Testis (tissue), 5 donors: ENCODE measurements at regions of chr11 and their contacts with region 1.

Region 1: DNA sequence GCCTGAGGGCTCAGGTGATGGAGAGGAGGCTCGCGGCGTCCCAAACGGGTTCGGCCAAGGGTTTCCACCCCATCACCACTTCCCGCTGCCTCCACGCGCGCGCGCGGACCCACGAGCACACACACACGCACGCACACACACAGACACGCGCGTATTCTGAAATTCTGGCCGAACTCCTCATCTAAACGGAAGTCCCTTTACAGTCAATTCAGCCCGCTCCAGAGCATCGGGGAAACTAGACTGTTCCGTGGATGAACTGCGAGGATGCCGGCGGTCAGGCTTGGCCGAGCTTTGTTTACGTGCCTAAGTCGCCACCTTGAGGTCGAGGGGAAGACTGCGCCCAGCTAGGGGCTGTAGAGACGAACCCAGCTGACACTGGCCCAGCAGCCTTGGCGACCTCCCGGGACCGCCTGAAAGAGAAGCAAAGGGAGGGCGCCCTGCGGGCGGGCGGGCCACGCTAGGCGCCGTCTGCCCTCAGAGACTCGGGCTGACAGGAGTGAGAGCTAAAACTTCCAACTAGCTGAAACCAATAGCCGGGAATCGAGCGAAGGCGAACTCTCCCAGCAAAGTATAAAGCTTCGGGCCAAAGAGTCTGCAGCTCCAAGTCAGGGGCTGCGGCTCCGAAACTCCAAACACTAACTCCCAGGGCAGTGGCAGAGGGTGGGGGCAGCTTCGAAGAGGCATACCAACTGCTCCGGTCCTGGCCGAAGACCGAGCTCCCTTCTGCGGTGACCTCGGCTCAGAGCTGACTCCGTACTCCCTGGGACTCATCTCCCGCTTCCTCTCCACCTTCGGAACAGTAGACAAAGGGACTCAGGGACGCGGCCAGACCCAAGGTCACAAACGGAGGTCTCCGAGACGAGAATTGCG is 124.7 kb upstream of the C11orf58 start:
- DNase-seq: peak; percentile 94
- H3K4me3 ChIP-seq: peak overlapping the region; percentile 36 to 62
- H3K27ac ChIP-seq: peak overlapping the region in 1 of 2 donors; percentile 28
- H3K4me1 ChIP-seq: peaks cover 12% of the 10 kb centered on the region
- H3K27me3 ChIP-seq: no peaks in the 10 kb centered on the region
- CTCF ChIP-seq: peak; percentile 75 to 84 (median 83)
- POLR2A ChIP-seq: no peak

Region 2: DNA sequence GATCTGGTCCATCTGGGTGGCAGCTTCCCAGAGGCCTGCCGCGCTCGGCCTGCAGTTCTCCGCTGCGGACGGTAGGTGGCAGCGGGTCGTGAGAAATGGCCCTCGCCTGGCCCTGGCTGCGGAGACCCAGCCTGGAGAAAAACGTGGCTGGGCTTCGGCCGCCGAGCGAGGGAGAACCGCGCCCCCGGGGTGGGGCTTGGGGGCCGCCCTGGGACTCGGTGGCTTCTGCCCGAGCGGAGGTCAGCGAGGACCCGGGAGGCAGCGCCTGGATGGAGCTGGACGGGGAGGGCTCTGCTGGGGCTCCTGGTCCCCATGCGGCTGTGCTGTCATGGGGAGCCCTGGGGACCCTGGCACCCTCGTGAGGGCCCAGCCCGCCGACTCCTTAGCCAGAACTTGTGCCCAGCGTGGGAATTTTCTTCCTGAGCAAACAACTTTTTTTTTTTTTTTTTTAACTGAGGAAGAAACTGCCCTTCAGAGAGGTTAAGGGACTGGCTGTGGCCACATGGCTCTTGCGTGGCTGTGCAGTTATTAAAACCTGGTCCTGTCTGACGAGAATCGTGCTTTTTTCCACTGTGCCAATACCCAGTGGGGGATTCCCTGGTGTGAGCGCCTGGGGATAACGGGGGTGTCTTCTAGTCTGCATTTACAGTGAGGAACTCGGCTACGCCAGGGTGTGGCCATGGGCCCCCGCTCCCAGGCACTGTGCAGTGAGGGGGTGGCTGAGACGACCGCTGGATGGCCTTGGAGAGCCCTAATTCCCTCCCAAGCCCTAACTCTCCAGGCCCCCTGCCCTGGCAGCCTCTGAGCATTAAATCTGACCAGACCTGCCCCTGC is 963.4 kb before region 1 on chr11:
- intact Hi-C with region 1: loop called (anchors 10 kb)
- DNase-seq: peak; percentile 94
- H3K4me3 ChIP-seq: peak overlapping the region; percentile 16 to 38
- H3K27ac ChIP-seq: no peak overlapping the region
- H3K4me1 ChIP-seq: peaks cover 9% of the 10 kb centered on the region
- H3K27me3 ChIP-seq: no peaks in the 10 kb centered on the region
- CTCF ChIP-seq: peak; percentile 96 to 98 (median 97)
- POLR2A ChIP-seq: no peak

Region 3: GRCh38 chr11:15969281-15969680 is 644.5 kb before region 1 on chr11:
- intact Hi-C with region 1: no loop called
- DNase-seq: peak; percentile 78
- H3K4me3 ChIP-seq: no peak overlapping the region
- H3K27ac ChIP-seq: peak overlapping the region in 1 of 2 donors; percentile 60
- H3K4me1 ChIP-seq: peaks cover 7% of the 10 kb centered on the region
- H3K27me3 ChIP-seq: no peaks in the 10 kb centered on the region
- CTCF ChIP-seq: no peak
- POLR2A ChIP-seq: no peak